Stomach (tissue), 19 donors: ENCODE measurements at regions of chr2 and their contacts with region 1.

Region 1: DNA sequence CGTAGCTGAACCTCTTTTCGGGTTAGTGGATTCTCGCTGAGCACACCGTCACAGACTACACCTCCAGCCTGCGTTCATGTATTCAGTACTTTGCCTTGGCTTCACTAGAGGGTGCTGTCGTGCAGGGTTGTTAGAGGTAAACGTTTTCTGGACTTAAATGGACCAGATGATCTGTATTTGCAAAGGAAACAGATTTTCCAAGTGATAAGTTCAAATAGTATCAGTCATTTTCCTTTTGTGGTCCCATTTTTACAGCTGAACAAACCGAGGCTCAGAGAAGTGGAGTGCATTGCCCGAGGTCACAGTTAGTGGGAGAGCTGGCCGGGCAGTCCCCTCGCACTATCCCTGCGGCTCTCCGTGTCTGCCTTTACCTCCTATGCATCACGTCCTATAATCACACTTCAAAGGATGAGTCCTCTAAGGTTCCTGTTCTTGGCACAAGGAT is 125.9 kb downstream of the MAP4K4 start:
- DNase-seq: peak; percentile 68 to 83
- H3K4me3 ChIP-seq: no peak overlapping the region
- H3K27ac ChIP-seq: no peak overlapping the region
- H3K4me1 ChIP-seq: peaks cover 16 to 64% (median 44%) of the 10 kb centered on the region in 4 donors
- H3K27me3 ChIP-seq: no peaks in the 10 kb centered on the region
- CTCF ChIP-seq: peak in 4 of 7 experiments; percentile 49 to 63 (median 56)
- EP300 ChIP-seq: no peak
- POLR2A ChIP-seq: no peak

Region 2: DNA sequence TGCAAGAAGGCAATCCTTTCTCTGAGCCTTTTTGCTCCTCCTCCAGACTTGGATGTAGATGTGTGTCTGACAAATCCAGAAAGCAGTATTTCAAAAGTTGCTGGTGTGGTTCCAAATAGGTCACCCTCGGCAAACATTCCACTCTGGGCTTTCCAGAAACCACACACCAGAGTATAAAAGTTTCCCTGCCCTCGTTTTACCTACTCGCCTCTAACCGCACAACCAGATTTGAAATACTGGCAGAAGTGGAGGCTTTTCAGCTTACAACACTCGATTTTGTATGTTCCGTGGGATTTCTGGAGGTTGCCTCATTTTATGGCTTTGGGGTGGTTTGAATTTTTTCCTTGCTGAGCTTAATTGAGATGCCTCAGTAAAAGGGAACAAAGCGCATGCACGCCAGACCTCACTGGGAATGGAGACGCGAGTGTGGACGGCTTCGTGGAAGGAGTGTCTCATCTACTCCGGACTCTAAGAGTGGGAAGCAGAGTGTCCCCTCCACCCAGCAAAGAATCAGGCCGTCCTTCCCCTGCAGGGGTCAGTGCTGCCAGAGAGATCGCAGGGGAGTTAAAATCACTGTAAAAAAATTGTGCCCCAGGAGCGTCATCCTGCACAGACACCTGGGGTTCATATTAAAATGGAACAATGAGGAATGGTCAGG is 865.2 kb before region 1 on chr2:
- intact Hi-C with region 1: no loop called
- DNase-seq: peak; percentile 56 to 70
- H3K4me3 ChIP-seq: no peak overlapping the region
- H3K27ac ChIP-seq: peak overlapping the region; percentile 6 to 64 (median 56)
- H3K4me1 ChIP-seq: peaks cover 14 to 29% (median 22%) of the 10 kb centered on the region in 4 donors
- H3K27me3 ChIP-seq: no peaks in the 10 kb centered on the region
- CTCF ChIP-seq: no peak
- EP300 ChIP-seq: no peak
- POLR2A ChIP-seq: no peak

Region 3: GRCh38 chr2:101697124-101698013 is 126.0 kb before region 1 on chr2 and contains the start of gene MAP4K4:
- intact Hi-C with region 1: loop called (anchors 10 kb)
- DNase-seq: peak; percentile 75 to 93
- H3K4me3 ChIP-seq: peak within 1 kb of the TSS; percentile 55 to 78 (median 70)
- H3K27ac ChIP-seq: peak within 1 kb of the TSS; percentile 75 to 92 (median 86)
- H3K4me1 ChIP-seq: peaks cover 15 to 45% (median 30%) of the 10 kb centered on the region in 4 donors
- H3K27me3 ChIP-seq: no peaks in the 10 kb centered on the region
- CTCF ChIP-seq: peak in 2 of 7 experiments; percentile 17 to 50
- EP300 ChIP-seq: no peak
- POLR2A ChIP-seq: no peak
- total RNA-seq, gene MAP4K4: 15.6 to 71.6 (median 29.0) TPM